Heart left ventricle (tissue), 16 donors: ENCODE measurements at regions of chr11 and their contacts with region 1.

Region 1: GRCh38 chr11:12043959-12044819 is 35.8 kb upstream of the DKK3 start:
- DNase-seq: peak; percentile 80 to 88 (median 81)
- ATAC-seq: peak; percentile 82 to 90 (median 88)
- H3K4me3 ChIP-seq: peak overlapping the region in 3 of 12 donors; percentile 3 to 12 (median 8)
- H3K27ac ChIP-seq: peak overlapping the region in 11 of 12 donors; percentile 31 to 78 (median 66)
- H3K4me1 ChIP-seq: peaks cover 0 to 23% (median 17%) of the 10 kb centered on the region in 12 donors
- H3K27me3 ChIP-seq: no peaks in the 10 kb centered on the region
- CTCF ChIP-seq: peak; percentile 89 to 98 (median 93)
- POLR2A ChIP-seq: no peak

Region 2: DNA sequence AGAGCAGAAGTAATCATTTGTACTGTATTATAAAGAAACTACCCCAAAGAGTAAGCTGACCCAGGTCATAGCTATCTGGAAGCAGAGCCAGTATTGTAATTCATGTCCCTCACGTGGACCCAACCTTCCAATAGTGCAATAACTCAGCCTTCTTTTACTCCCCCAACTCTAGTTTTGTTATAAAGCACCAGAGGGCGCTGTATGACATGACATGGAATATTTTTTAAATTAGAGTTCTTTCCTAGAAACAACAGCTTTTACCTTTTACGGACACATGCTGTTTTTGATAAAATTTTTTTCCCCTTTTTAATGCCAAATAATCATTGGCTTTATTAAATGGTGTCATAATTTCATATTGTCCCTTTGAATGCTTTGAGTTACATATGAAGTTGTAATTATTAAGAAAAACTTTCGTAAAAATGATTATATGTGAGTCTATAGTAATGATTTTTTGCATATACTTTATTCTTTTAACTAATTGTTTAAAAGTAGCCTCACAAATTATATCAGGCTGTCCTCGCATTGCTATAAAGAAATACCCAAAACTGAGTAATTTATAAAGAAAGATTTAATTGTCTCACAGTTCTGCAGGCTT is 112.6 kb before region 1 on chr11:
- intact Hi-C with region 1: loop called (anchors 1 to 2 kb)
- DNase-seq: peak in 1 of 5 donors; percentile 9
- ATAC-seq: peak in 3 of 4 donors; percentile 47 to 69 (median 63)
- H3K4me3 ChIP-seq: no peak overlapping the region
- H3K27ac ChIP-seq: peak overlapping the region in 1 of 12 donors; percentile 14
- H3K4me1 ChIP-seq: peaks cover 0 to 10% (median under 1%) of the 10 kb centered on the region in 12 donors
- H3K27me3 ChIP-seq: no peaks in the 10 kb centered on the region
- CTCF ChIP-seq: peak; percentile 56 to 82 (median 69)
- POLR2A ChIP-seq: no peak

Region 3: DNA sequence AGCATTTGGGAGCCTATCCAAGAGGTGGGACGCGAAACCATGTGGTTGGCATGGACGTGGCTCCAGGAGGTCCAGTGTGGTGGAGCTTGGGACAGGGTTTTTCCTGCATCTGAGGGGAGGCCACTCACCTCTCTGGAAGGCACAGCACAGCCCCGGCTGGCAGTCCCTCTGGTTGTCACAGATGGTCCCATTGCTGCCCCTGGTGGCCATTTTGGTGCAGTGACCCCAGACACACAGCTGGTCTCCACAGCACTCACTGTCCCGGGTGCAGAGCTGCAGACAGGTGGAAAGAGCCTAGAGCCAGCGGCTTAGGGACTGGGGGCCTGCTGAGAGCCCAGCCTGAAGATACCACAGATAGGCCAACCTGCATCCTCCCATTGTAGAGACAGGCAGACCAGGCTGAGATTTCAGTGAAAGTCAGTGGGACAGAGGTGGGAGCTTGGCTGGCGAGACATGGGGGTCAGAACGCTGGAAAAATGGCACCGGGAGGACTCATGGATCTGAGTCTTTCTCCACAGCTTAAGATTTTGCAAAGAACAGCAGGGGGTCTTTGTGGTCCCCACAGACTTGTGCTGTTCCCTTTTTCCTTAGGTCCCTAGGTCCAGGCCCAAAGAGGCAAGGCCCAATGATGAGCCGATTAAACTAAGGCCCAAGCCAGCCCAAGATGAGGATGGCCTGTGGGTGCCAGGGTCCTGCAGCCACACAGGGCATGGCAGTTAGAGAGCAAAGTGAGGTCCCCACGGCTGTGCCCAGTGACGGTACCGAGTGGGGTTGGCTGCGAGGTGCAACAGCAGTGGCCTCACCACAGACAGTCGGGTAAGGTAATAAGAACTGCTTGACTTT is 77.1 kb before region 1 on chr11:
- intact Hi-C with region 1: loop called in 2 of 10 experiments (anchors 5 to 10 kb)
- DNase-seq: peak; percentile 70 to 89 (median 87)
- ATAC-seq: peak in 3 of 4 donors; percentile 63 to 73 (median 73)
- H3K4me3 ChIP-seq: no peak overlapping the region
- H3K27ac ChIP-seq: peak overlapping the region in 1 of 12 donors; percentile 62
- H3K4me1 ChIP-seq: peaks cover 0 to 94% (median 42%) of the 10 kb centered on the region in 12 donors
- H3K27me3 ChIP-seq: no peaks in the 10 kb centered on the region
- CTCF ChIP-seq: peak; percentile 69 to 89 (median 78)
- POLR2A ChIP-seq: no peak

Region 4: DNA sequence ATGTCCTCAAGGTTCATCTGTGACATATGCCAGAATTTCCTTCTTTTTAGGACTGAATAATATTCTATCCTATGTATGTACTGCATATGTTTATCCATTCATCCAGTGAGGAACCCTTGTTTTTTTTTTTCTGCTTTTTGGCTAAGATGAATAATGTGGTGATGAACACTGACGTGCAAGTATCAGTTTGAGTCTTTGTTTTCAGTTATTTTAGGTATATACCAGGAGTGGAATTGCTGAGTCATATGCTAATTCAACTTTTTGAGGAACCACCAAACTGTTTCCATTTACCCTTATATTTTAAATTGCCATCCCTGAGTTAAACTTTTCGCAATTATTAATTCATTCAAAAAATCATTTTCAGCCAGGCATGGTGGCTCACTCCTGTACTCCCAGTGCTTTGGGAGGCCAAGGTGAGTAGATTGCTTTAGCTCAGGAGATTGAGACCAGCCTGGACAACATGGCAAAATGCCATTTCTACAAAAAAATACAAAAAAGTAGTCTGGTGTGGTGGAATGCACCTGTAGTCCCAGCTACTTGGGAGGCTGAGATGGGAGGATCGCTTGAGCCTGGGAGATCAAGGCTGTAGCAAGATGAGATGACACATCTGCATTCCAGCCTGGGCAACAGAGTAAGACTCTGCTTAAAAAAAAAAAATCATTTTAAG is 130.4 kb after region 1 on chr11:
- intact Hi-C with region 1: no loop called
- DNase-seq: no peak
- ATAC-seq: no peak
- H3K4me3 ChIP-seq: no peak overlapping the region
- H3K27ac ChIP-seq: peak overlapping the region in 2 of 12 donors; percentile 21 to 34
- H3K4me1 ChIP-seq: peaks cover 0 to 74% (median 39%) of the 10 kb centered on the region in 12 donors
- H3K27me3 ChIP-seq: no peaks in the 10 kb centered on the region
- CTCF ChIP-seq: no peak
- POLR2A ChIP-seq: no peak

Region 5: GRCh38 chr11:12356944-12357650 is 312.9 kb after region 1 on chr11:
- intact Hi-C with region 1: no loop called
- DNase-seq: no peak
- ATAC-seq: no peak
- H3K4me3 ChIP-seq: no peak overlapping the region
- H3K27ac ChIP-seq: no peak overlapping the region
- H3K4me1 ChIP-seq: peaks cover 0 to 8% (median 0%) of the 10 kb centered on the region in 12 donors
- H3K27me3 ChIP-seq: no peaks in the 10 kb centered on the region
- CTCF ChIP-seq: no peak
- POLR2A ChIP-seq: no peak